ENCODE measurements at regions of chr17 and their contacts with region 1.

Region 1: DNA sequence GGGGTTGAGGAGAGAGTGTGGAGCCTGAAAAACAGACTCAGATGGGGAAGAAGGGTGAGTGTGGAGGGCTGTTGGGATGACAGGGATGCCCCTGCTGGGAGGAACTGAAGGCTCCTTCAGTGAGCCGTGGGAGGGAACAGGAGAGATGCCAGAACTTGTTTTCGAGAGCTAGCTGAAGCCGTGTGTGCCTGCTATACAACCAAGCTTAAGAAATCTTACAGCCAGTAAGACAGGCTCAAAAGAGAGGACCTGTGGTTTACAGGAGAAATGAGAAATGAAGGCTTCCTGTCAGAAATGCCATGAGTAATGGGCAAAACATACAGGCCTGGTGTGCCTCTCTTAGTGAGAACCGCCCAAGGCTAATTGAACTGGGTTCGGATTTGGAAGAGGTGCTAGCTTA is 99.6 kb downstream of the SPACA3 start:
- DNase-seq: no peak
- H3K4me3 ChIP-seq: no peak overlapping the region
- H3K27ac ChIP-seq: no peak overlapping the region
- H3K4me1 ChIP-seq: no peaks in the 10 kb centered on the region
- H3K27me3 ChIP-seq: peaks cover 0 to 68% (median 4%) of the 10 kb centered on the region in 4 donors
- CTCF ChIP-seq: no peak
- EP300 ChIP-seq: no peak
- POLR2A ChIP-seq: no peak

Region 2: GRCh38 chr17:33164169-33164881 is 73.1 kb after region 1 on chr17:
- intact Hi-C with region 1: loop called (anchors 10 kb)
- DNase-seq: no peak
- H3K4me3 ChIP-seq: no peak overlapping the region
- H3K27ac ChIP-seq: no peak overlapping the region
- H3K4me1 ChIP-seq: peaks cover 11 to 16% (median 13%) of the 10 kb centered on the region in 4 donors
- H3K27me3 ChIP-seq: no peaks in the 10 kb centered on the region
- CTCF ChIP-seq: no peak
- EP300 ChIP-seq: no peak
- POLR2A ChIP-seq: no peak

Measured in esophagus muscularis mucosa (tissue), 4 donors.